PC-9 (cell line): ENCODE measurements at regions of chr3 and their contacts with region 1.

Region 1: GRCh38 chr3:100492059-100493006 is at the start of gene TMEM45A:
- DNase-seq: peak; percentile 89 to 100
- H3K4me3 ChIP-seq: peak within 1 kb of the TSS; percentile 79
- H3K27ac ChIP-seq: 0 out of 2 replicates have a peak within 1 kb of the TSS, but pooled peaks have one; percentile 7
- H3K4me1 ChIP-seq: peaks cover 28% of the 10 kb centered on the region
- H3K27me3 ChIP-seq: no peaks in the 10 kb centered on the region
- CTCF ChIP-seq: no peak
- total RNA-seq, gene TMEM45A: 21.6 and 31.1 TPM in 2 replicates

Region 2: GRCh38 chr3:100008081-100008698 is 484.1 kb before region 1 on chr3:
- CTCF ChIA-PET with region 1: interaction called, 12 read pairs
- POLR2A ChIA-PET with region 1: no interaction called
- intact Hi-C with region 1: no loop called
- DNase-seq: no peak
- H3K4me3 ChIP-seq: no peak overlapping the region
- H3K27ac ChIP-seq: no peak overlapping the region
- H3K4me1 ChIP-seq: peaks cover 34% of the 10 kb centered on the region
- H3K27me3 ChIP-seq: no peaks in the 10 kb centered on the region
- CTCF ChIP-seq: no peak

Region 3: GRCh38 chr3:100525753-100526612 is 33.6 kb after region 1 on chr3:
- CTCF ChIA-PET with region 1: interaction called, 3 read pairs
- POLR2A ChIA-PET with region 1: interaction called, 3 read pairs
- intact Hi-C with region 1: loop called (anchors 1 kb)
- DNase-seq: peak; percentile 82 to 99
- H3K4me3 ChIP-seq: peak overlapping the region; percentile 30; the same call in 1 of the 2 replicates
- H3K27ac ChIP-seq: peak overlapping the region; percentile 86
- H3K4me1 ChIP-seq: peaks cover 26% of the 10 kb centered on the region
- H3K27me3 ChIP-seq: no peaks in the 10 kb centered on the region
- CTCF ChIP-seq: no peak

Region 4: GRCh38 chr3:100603469-100603868 is 111.1 kb after region 1 on chr3:
- CTCF ChIA-PET with region 1: no interaction called
- POLR2A ChIA-PET with region 1: interaction called, 12 read pairs
- intact Hi-C with region 1: no loop called
- DNase-seq: peak; percentile 41 to 60
- H3K4me3 ChIP-seq: no peak overlapping the region
- H3K27ac ChIP-seq: no peak overlapping the region
- H3K4me1 ChIP-seq: peaks cover 14% of the 10 kb centered on the region
- H3K27me3 ChIP-seq: no peaks in the 10 kb centered on the region
- CTCF ChIP-seq: peak; percentile 77

Region 5: GRCh38 chr3:101036213-101036618 is 543.9 kb after region 1 on chr3:
- CTCF ChIA-PET with region 1: no interaction called
- POLR2A ChIA-PET with region 1: no interaction called
- intact Hi-C with region 1: loop called (anchors 10 kb)
- DNase-seq: peak; percentile 91 to 99
- H3K4me3 ChIP-seq: peak overlapping the region; percentile 14; the same call in 1 of the 2 replicates
- H3K27ac ChIP-seq: peak overlapping the region; percentile 92
- H3K4me1 ChIP-seq: peaks cover 35% of the 10 kb centered on the region
- H3K27me3 ChIP-seq: no peaks in the 10 kb centered on the region
- CTCF ChIP-seq: no peak

Region 6: DNA sequence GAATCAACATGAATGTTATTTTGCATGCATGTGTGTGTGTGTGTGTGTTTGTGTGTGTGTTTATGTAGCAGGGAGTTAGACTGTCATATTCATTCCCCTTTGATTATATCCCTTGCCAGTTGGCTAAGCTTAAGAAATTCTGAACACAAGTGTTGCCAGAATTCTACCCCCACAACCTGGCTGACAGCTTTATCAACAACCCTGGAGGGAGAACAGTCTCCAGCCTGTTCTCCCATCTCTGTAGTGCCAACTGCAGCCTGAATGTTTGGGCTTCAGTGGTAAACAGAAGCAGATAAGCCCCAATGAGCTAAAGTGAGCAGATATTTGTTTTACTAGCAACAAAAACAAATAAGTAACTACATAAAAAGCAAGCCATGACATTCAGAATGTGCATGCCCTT is 663.5 kb after region 1 on chr3:
- CTCF ChIA-PET with region 1: no interaction called
- POLR2A ChIA-PET with region 1: no interaction called
- intact Hi-C with region 1: no loop called
- DNase-seq: no peak
- H3K4me3 ChIP-seq: no peak overlapping the region
- H3K27ac ChIP-seq: no peak overlapping the region
- H3K4me1 ChIP-seq: no peaks in the 10 kb centered on the region
- H3K27me3 ChIP-seq: no peaks in the 10 kb centered on the region
- CTCF ChIP-seq: no peak